PC-9 (cell line): ENCODE measurements at regions of chr11 and their contacts with region 1.

Region 1: DNA sequence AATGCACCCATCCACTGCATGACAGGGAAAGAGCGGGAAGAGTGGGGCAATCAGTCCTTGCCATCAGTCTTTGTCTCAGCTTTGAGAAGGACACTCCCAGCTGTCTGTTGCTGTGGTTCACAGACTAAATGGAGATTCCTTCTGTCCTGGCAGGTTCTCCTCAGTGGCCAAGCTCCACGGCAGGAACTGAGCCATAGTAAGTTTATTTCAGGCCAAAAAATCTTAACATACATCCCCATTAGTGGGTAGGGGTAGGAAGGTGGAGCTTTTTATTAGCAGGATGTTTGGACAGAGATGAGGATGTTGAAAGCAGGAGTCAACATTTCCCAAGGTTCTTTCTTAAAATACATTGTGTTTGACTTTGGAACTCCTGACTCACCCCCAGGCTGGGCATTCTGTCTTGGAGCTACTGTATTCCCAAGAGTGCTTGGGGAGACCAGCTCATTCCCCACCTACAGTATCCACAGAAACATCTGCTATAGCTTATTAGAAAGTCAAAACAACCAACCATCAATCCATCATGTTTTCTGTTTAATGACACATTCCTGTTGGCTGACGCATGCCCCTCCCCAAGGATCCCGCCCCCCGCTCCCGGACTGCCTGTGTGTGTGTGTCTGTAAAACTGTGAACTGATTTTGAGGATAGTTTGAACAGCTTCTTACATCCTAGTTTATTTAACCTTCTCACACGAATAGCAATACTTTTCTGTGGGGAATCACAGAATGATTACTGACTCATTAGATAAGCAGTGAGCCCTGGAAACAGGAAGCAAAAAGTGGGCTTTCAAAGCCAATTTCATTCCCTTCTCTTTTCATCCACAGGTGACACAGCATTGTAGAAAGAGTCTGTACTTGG is 109.5 kb downstream of the CCDC81 start:
- DNase-seq: peak; percentile 87 to 100
- H3K4me3 ChIP-seq: peak overlapping the region; percentile 4; the same call in 1 of the 2 replicates
- H3K27ac ChIP-seq: peak overlapping the region; percentile 97
- H3K4me1 ChIP-seq: peaks cover 50% of the 10 kb centered on the region
- H3K27me3 ChIP-seq: no peaks in the 10 kb centered on the region
- CTCF ChIP-seq: no peak

Region 2: DNA sequence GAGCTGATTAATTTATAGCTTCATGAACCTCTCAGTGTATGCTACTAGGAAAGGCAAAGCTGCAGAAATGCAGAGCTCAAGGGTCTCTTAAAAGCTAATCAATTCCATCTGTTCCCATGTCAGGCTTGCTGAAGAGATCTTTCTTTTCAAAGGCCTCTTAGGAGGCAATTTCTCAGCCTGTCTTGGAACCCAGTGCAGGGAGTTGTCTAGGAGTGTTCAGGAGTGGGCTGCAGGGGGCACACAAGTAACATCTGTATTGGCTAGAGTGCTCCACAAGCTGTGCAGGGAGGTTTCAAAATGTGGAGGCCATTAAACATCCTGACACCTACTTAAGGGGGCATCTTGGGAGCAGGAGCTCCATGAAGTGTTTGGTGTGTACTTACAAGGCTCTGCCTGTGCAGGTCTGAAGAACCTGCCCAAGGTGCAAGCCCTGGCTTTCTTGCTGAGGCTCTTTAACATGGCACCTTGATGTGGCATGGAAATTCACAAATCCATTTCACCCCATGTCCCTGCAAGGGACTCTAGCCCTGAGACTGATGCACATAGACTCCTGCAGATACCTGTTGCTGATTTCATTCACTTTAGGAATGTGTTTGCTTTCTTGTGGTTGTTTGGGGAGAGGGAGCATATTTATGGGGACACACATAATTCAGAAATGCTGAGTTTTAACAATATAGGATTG is 53.5 kb after region 1 on chr11:
- CTCF ChIA-PET with region 1: no interaction called
- POLR2A ChIA-PET with region 1: no interaction called
- intact Hi-C with region 1: no loop called
- DNase-seq: peak in 1 of 2 experiments; percentile 33
- H3K4me3 ChIP-seq: no peak overlapping the region
- H3K27ac ChIP-seq: no peak overlapping the region
- H3K4me1 ChIP-seq: peaks cover 4% of the 10 kb centered on the region; the same call in 1 of the 2 replicates
- H3K27me3 ChIP-seq: no peaks in the 10 kb centered on the region
- CTCF ChIP-seq: no peak

Region 3: GRCh38 chr11:86571273-86571948 is 87.2 kb after region 1 on chr11:
- CTCF ChIA-PET with region 1: no interaction called
- POLR2A ChIA-PET with region 1: no interaction called
- intact Hi-C with region 1: loop called (anchors 5 kb)
- DNase-seq: no peak
- H3K4me3 ChIP-seq: no peak overlapping the region
- H3K27ac ChIP-seq: no peak overlapping the region
- H3K4me1 ChIP-seq: peaks cover 11% of the 10 kb centered on the region; the same call in 1 of the 2 replicates
- H3K27me3 ChIP-seq: no peaks in the 10 kb centered on the region
- CTCF ChIP-seq: peak; percentile 60

Region 4: DNA sequence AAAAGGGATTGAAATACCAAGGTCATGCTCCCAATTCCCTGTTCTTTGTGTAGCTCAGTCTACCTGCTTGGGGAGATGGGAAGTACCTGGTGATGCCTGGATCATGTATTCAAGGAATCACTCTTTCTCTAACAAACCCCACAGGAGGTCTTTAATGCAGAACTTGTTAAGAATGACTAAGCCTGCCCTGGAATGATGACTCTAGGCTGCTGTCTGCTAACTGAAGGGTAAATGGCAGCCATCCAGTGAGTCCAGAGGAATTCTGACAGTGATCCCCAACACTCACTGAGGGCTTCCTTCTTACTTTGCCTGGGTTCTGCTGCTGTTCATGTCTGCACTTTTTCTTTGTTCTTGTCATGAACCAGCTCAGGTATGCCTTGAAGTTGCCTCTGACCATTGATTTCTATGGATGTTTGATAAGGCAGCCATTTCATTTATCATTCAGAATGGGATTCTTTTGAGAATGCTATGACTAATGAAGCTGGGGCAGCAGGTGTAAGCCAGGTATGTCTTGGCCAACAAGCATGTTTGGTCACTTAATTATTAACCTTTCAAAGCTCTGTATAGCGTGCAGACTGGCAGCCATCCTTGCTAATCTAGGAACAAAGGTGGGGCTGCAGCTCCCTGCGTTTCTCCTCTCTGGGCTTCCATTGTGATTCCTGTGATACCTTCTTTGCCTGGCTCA is 327.6 kb after region 1 on chr11:
- CTCF ChIA-PET with region 1: no interaction called
- POLR2A ChIA-PET with region 1: interaction called, 19 read pairs
- intact Hi-C with region 1: no loop called
- DNase-seq: peak; percentile 52 to 85
- H3K4me3 ChIP-seq: no peak overlapping the region
- H3K27ac ChIP-seq: no peak overlapping the region
- H3K4me1 ChIP-seq: peaks cover 24% of the 10 kb centered on the region
- H3K27me3 ChIP-seq: no peaks in the 10 kb centered on the region
- CTCF ChIP-seq: no peak